ENCODE measurements at regions of chr1 and their contacts with region 1.

Region 1: DNA sequence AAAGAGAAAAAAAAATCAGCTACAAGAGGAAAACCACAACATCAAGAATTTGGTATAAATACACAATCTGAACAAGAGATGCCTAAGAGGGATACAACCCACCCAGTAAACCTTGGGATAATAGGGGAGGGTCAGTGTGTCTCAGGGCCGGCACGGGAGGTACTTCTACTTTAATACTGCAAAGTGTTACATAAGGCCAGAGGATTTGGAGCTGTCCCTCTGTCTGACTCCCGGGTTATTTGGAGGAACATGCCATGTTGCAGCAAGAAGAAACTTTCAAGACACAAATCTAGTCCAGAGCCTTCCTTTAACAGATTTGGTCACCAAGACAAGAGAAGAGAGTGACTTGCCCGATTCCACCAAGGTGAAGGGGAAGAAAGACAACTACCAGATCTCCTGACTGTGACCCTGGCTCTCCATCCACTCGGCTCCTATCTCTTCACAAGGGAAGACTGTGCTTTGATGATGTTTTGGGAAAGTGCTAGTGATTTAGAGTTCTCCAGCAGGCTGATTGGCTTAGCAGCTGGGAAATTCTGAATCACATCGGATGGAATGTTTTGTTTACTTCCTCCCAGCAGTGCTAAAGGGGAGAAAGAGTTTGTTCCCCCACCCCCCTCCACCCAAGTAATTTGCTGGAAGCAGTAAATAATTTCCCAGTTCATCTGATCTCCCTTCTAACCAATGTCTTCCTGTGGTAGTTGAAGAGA is 29.3 kb downstream of the SGIP1 start:
- DNase-seq: peak; percentile 97
- H3K4me3 ChIP-seq: peak overlapping the region in 1 of 3 experiments; percentile 23
- H3K27ac ChIP-seq: peak overlapping the region; percentile 98
- H3K4me1 ChIP-seq: peaks cover 29% of the 10 kb centered on the region
- H3K27me3 ChIP-seq: no peaks in the 10 kb centered on the region
- CTCF ChIP-seq: no peak
- POLR2A ChIP-seq: peak; percentile 53

Region 2: GRCh38 chr1:66271216-66271903 is 291.9 kb before region 1 on chr1:
- CTCF ChIA-PET with region 1: no interaction called
- POLR2A ChIA-PET with region 1: no interaction called
- dilution Hi-C with region 1: no loop called
- intact Hi-C with region 1: no loop called
- DNase-seq: peak; percentile 98
- H3K4me3 ChIP-seq: no peak overlapping the region
- H3K27ac ChIP-seq: peak overlapping the region; percentile 71
- H3K4me1 ChIP-seq: peaks cover 49% of the 10 kb centered on the region
- H3K27me3 ChIP-seq: no peaks in the 10 kb centered on the region
- CTCF ChIP-seq: no peak
- POLR2A ChIP-seq: peak; percentile 73

Region 3: GRCh38 chr1:66300972-66301451 is 262.2 kb before region 1 on chr1:
- CTCF ChIA-PET with region 1: no interaction called
- POLR2A ChIA-PET with region 1: no interaction called
- dilution Hi-C with region 1: no loop called
- intact Hi-C with region 1: no loop called
- DNase-seq: peak; percentile 86
- H3K4me3 ChIP-seq: peak overlapping the region; percentile 2 to 82 (median 64)
- H3K27ac ChIP-seq: peak overlapping the region; percentile 92
- H3K4me1 ChIP-seq: peaks cover 6% of the 10 kb centered on the region
- H3K27me3 ChIP-seq: no peaks in the 10 kb centered on the region
- CTCF ChIP-seq: no peak
- POLR2A ChIP-seq: no peak

Region 4: GRCh38 chr1:66371233-66372005 is 191.8 kb before region 1 on chr1:
- CTCF ChIA-PET with region 1: no interaction called
- POLR2A ChIA-PET with region 1: no interaction called
- dilution Hi-C with region 1: no loop called
- intact Hi-C with region 1: loop called (anchors 1 kb)
- DNase-seq: peak; percentile 98
- H3K4me3 ChIP-seq: peak overlapping the region in 1 of 3 experiments; percentile 29
- H3K27ac ChIP-seq: peak overlapping the region; percentile 99
- H3K4me1 ChIP-seq: peaks cover 60% of the 10 kb centered on the region
- H3K27me3 ChIP-seq: no peaks in the 10 kb centered on the region
- CTCF ChIP-seq: no peak
- POLR2A ChIP-seq: no peak

Region 5: DNA sequence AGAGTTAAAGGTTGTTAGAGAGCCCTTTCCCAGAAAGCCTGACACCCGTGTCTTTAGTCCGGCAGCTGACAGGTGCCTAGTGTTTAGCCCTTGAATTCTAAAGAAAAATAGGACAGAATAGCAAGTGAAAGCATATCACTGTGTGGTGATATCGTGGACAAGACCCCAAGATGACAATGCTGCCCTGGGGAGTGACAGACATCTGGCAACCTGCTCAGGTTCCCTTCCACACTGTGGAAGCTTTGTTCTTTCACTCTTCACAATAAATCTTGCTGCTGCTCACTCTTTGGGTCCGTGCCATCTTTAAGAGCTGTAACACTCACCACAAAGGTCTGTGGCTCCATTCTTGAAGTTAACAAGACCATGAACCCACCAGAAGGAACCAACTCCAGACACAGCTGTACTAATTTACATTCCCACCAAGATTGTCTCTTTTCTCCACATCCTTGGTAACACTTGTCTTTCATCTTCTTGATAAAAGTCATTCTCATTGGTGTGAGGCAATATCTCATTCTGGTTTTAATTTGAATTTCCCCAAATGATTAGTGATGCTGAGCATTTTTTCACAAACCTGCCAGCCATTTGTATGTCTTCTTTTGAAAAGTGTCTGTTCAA is 136.9 kb before region 1 on chr1:
- CTCF ChIA-PET with region 1: no interaction called
- POLR2A ChIA-PET with region 1: no interaction called
- dilution Hi-C with region 1: no loop called
- intact Hi-C with region 1: no loop called
- DNase-seq: no peak
- H3K4me3 ChIP-seq: no peak overlapping the region
- H3K27ac ChIP-seq: no peak overlapping the region
- H3K4me1 ChIP-seq: no peaks in the 10 kb centered on the region
- H3K27me3 ChIP-seq: no peaks in the 10 kb centered on the region
- CTCF ChIP-seq: no peak
- POLR2A ChIP-seq: no peak

Region 6: GRCh38 chr1:66533804-66534740 is 29.2 kb before region 1 on chr1 and contains the start of gene SGIP1:
- CTCF ChIA-PET with region 1: interaction called, 4 read pairs
- POLR2A ChIA-PET with region 1: no interaction called
- dilution Hi-C with region 1: no loop called
- intact Hi-C with region 1: loop called (anchors 1 kb)
- DNase-seq: peak; percentile 88
- H3K4me3 ChIP-seq: peak within 1 kb of the TSS; percentile 41 to 66 (median 47)
- H3K27ac ChIP-seq: peak within 1 kb of the TSS; percentile 75
- H3K4me1 ChIP-seq: peaks cover 29% of the 10 kb centered on the region
- H3K27me3 ChIP-seq: no peaks in the 10 kb centered on the region
- CTCF ChIP-seq: no peak
- POLR2A ChIP-seq: no peak
- total RNA-seq, gene SGIP1: 51.0 and 68.9 TPM in 2 replicates

Region 7: DNA sequence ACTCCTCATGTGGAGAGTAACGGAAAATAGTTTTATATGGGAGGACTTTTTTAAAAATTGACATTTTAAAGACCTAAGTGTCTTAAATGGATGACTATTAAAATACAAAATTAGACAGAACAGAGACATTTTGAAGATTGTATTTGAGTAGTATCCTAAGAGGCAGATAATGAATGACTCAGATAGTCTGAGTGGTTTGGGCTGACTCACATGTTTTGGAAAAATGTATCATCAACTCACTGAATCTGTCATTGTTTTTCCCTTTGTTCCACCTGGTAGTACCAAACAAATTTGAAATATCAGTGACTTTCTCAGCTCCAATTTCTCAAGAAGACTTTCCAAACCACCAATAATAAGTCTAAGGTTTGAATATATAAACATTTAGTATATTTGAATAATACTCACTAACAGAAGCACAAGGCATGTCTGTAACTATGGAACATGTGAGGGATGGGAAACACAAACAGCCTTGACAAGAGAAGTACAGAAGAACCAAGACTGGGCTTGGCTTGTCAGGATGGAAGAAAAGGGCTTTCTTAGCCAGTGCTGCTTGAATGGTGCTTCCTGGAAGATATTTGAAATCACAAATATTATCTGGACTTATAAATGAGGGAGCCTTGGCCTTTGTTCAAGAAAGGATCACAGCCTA is 61.3 kb after region 1 on chr1:
- CTCF ChIA-PET with region 1: no interaction called
- POLR2A ChIA-PET with region 1: no interaction called
- dilution Hi-C with region 1: no loop called
- intact Hi-C with region 1: loop called (anchors 1 kb)
- DNase-seq: peak; percentile 74
- H3K4me3 ChIP-seq: peak overlapping the region in 1 of 3 experiments; percentile 15
- H3K27ac ChIP-seq: peak overlapping the region; percentile 85
- H3K4me1 ChIP-seq: peaks cover 23% of the 10 kb centered on the region
- H3K27me3 ChIP-seq: no peaks in the 10 kb centered on the region
- CTCF ChIP-seq: no peak
- POLR2A ChIP-seq: no peak

Region 8: DNA sequence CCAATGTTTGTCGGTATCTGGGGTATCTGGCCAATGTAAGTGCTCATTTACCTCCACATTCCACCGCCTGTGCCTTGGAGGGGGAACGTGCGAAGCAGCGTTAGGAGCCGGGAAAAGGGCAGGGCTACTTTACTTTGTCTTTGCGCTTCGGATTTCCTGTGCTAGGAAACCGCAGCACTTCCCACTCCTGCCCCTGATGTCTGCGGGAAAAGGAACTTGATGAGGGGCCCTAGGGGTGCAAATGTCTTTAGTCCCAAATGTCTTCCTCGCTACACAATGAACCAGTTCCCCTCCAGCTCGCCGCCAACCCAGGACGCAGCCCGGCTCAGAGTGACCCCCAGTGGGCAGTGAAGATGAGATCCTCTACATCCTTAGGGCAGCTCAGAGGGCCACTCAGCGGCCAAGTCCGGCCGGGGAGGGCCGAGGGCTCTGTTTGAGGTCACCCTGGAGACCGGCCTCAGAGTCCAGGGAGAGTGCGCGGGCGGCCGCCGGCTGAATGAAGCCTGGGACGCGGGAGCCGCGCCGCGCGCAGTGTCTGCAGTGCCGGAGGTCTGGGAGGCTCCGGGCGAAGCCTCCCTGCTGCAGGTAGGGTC is 188.8 kb after region 1 on chr1 and contains the start of gene DYNLT5:
- CTCF ChIA-PET with region 1: no interaction called
- POLR2A ChIA-PET with region 1: no interaction called
- dilution Hi-C with region 1: no loop called
- intact Hi-C with region 1: loop called (anchors 1 kb)
- DNase-seq: peak; percentile 72
- H3K4me3 ChIP-seq: peak within 1 kb of the TSS in 2 of 3 experiments; percentile 27 to 41
- H3K27ac ChIP-seq: peak within 1 kb of the TSS; percentile 25
- H3K4me1 ChIP-seq: peaks cover 26% of the 10 kb centered on the region
- H3K27me3 ChIP-seq: no peaks in the 10 kb centered on the region
- CTCF ChIP-seq: peak; percentile 33 to 46
- POLR2A ChIP-seq: no peak
- total RNA-seq, gene DYNLT5: 4.5 and 12.5 TPM in 2 replicates

Measured in endothelial cell of umbilical vein (primary cell).